ENCODE measurements at regions of chr2 and their contacts with region 1.

Region 1: GRCh38 chr2:147937744-147938349 is 82.7 kb downstream of the ORC4 start:
- DNase-seq: no peak
- H3K4me3 ChIP-seq: no peak overlapping the region
- H3K27ac ChIP-seq: no peak overlapping the region
- H3K4me1 ChIP-seq: no peaks in the 10 kb centered on the region
- H3K27me3 ChIP-seq: no peaks in the 10 kb centered on the region
- CTCF ChIP-seq: peak; percentile 82

Region 2: GRCh38 chr2:147665105-147665504 is 272.7 kb before region 1 on chr2:
- CTCF ChIA-PET with region 1: no interaction called
- POLR2A ChIA-PET with region 1: no interaction called
- intact Hi-C with region 1: no loop called
- DNase-seq: no peak
- H3K4me3 ChIP-seq: no peak overlapping the region
- H3K27ac ChIP-seq: no peak overlapping the region
- H3K4me1 ChIP-seq: no peaks in the 10 kb centered on the region
- H3K27me3 ChIP-seq: no peaks in the 10 kb centered on the region
- CTCF ChIP-seq: no peak

Region 3: GRCh38 chr2:147968571-147968970 is 30.7 kb after region 1 on chr2:
- CTCF ChIA-PET with region 1: no interaction called
- POLR2A ChIA-PET with region 1: no interaction called
- intact Hi-C with region 1: no loop called
- DNase-seq: no peak
- H3K4me3 ChIP-seq: no peak overlapping the region
- H3K27ac ChIP-seq: no peak overlapping the region
- H3K4me1 ChIP-seq: no peaks in the 10 kb centered on the region
- H3K27me3 ChIP-seq: no peaks in the 10 kb centered on the region
- CTCF ChIP-seq: no peak

Region 4: GRCh38 chr2:148509288-148509902 is 571.5 kb after region 1 on chr2:
- CTCF ChIA-PET with region 1: no interaction called
- POLR2A ChIA-PET with region 1: no interaction called
- intact Hi-C with region 1: loop called (anchors 1 kb)
- DNase-seq: peak; percentile 63 to 80
- H3K4me3 ChIP-seq: peak overlapping the region; percentile 38; the same call in 1 of the 2 replicates
- H3K27ac ChIP-seq: no peak overlapping the region
- H3K4me1 ChIP-seq: peaks cover 9% of the 10 kb centered on the region
- H3K27me3 ChIP-seq: no peaks in the 10 kb centered on the region
- CTCF ChIP-seq: peak; percentile 79

Region 5: GRCh38 chr2:148794558-148794957 is 856.7 kb after region 1 on chr2:
- CTCF ChIA-PET with region 1: interaction called, 19 read pairs
- POLR2A ChIA-PET with region 1: interaction called, 5 read pairs
- intact Hi-C with region 1: no loop called
- DNase-seq: peak in 1 of 2 experiments; percentile 48
- H3K4me3 ChIP-seq: no peak overlapping the region
- H3K27ac ChIP-seq: no peak overlapping the region
- H3K4me1 ChIP-seq: no peaks in the 10 kb centered on the region
- H3K27me3 ChIP-seq: no peaks in the 10 kb centered on the region
- CTCF ChIP-seq: no peak